ENCODE measurements at regions of chr4 and their contacts with region 1.

Region 1: GRCh38 chr4:112765317-112765975 is 128.5 kb downstream of the LARP7 start:
- DNase-seq: no peak
- H3K4me3 Mint-ChIP-seq: no peak overlapping the region
- H3K27ac Mint-ChIP-seq: no peak overlapping the region
- H3K4me1 Mint-ChIP-seq: no peaks in the 10 kb centered on the region
- H3K27me3 Mint-ChIP-seq: peaks cover 3% of the 10 kb centered on the region

Region 2: GRCh38 chr4:112279025-112279881 is 486.2 kb before region 1 on chr4:
- CTCF ChIA-PET with region 1: no interaction called
- intact Hi-C with region 1: loop called (anchors 10 kb)
- DNase-seq: no peak
- H3K4me3 Mint-ChIP-seq: peak overlapping the region; percentile 30
- H3K27ac Mint-ChIP-seq: peak overlapping the region; percentile 63
- H3K4me1 Mint-ChIP-seq: peaks cover 79% of the 10 kb centered on the region
- H3K27me3 Mint-ChIP-seq: no peaks in the 10 kb centered on the region

Region 3: GRCh38 chr4:112536123-112536522 is 229.3 kb before region 1 on chr4:
- CTCF ChIA-PET with region 1: interaction called, 3 read pairs
- intact Hi-C with region 1: loop called (anchors 5 kb)
- DNase-seq: no peak
- H3K4me3 Mint-ChIP-seq: no peak overlapping the region
- H3K27ac Mint-ChIP-seq: no peak overlapping the region
- H3K4me1 Mint-ChIP-seq: no peaks in the 10 kb centered on the region
- H3K27me3 Mint-ChIP-seq: peaks cover 4% of the 10 kb centered on the region

Region 4: DNA sequence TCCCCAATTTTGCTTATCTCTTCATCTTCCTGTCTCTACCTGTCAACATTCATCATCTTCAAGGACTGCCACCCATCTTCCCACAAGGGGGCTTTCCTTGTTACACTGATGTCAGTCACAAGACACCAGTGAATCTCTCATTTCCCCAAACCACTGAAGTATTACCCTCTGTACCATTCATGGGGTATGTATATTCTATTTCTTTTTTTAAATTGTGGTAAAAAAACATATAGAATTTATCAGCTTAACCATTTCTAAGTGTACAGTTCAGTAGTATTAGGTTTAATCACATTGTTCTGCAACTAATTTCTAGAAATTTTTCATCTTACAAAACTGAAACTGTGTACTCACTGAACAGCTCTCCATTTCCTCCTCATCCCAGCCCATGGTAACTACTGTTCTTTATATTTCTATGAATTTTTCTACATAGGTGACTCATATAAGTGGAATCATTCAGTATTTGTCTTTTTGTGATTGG is 29.9 kb before region 1 on chr4:
- CTCF ChIA-PET with region 1: interaction called, 21 read pairs
- intact Hi-C with region 1: no loop called
- DNase-seq: peak; percentile 21
- H3K4me3 Mint-ChIP-seq: no peak overlapping the region
- H3K27ac Mint-ChIP-seq: no peak overlapping the region
- H3K4me1 Mint-ChIP-seq: peaks cover 14% of the 10 kb centered on the region
- H3K27me3 Mint-ChIP-seq: no peaks in the 10 kb centered on the region

Region 5: DNA sequence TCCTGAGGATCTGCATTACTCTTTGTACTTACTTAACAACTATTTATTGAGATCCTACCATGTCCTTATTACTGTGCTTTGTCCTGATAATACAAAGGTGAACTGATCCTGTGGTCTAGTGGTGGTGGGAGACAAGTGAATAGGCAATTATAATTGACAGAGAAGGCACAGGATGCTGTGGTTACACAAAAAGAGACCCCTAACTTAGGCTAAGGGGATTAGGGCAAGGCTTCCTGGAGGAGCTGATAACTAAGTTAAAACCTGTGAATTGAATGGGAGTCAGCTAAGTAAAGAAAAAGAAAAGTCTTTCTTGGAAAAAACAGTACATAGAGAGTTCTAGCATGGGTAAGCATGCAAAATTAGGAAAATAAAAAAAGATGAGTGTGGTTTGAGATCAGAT is 35.9 kb after region 1 on chr4:
- CTCF ChIA-PET with region 1: no interaction called
- intact Hi-C with region 1: no loop called
- DNase-seq: no peak
- H3K4me3 Mint-ChIP-seq: no peak overlapping the region
- H3K27ac Mint-ChIP-seq: no peak overlapping the region
- H3K4me1 Mint-ChIP-seq: no peaks in the 10 kb centered on the region
- H3K27me3 Mint-ChIP-seq: peaks cover 3% of the 10 kb centered on the region

Region 6: DNA sequence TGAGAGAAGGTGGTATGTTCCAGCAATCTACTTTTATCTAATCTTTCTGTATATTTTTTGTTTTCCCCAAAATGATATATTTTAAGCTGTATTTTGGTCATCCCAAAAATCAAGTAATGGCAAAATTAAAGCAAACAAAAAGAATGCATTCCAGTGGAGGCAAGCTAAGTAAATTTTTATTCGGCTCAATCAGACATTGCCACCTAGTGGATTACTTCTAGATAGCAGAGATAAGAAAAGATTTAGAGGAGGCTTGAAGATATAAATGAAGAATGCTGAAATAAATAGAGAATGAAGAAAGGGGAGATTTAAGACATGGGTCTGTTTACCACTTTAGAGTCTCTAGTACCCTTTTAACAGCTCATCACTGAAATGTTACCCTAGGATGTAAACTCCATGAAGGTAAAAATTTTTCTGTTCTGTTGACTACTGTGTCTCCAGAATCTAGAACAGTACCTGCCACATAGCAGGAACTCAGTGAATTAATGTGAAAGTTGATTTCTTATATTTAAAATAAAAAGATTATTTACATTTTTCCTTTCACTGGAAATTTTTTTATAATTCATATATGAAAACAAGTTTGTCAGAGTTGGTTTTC is 173.1 kb after region 1 on chr4:
- CTCF ChIA-PET with region 1: interaction called, 10 read pairs
- intact Hi-C with region 1: loop called (anchors 1 kb)
- DNase-seq: no peak
- H3K4me3 Mint-ChIP-seq: no peak overlapping the region
- H3K27ac Mint-ChIP-seq: no peak overlapping the region
- H3K4me1 Mint-ChIP-seq: no peaks in the 10 kb centered on the region
- H3K27me3 Mint-ChIP-seq: peaks cover 17% of the 10 kb centered on the region

Measured in activated naive CD4-positive, alpha-beta T cell treated with anti-CD3 and anti-CD28 coated beads for 36 hours (primary cell).